Dendritic cell treated with granulocyte-macrophage colony-stimulating factor and Interleukin-4, amounts not matched to agents 40 ng/mL and 50 ng/mL, for 4 days (primary cell): ENCODE measurements at regions of chr1 and their contacts with region 1.

Region 1: DNA sequence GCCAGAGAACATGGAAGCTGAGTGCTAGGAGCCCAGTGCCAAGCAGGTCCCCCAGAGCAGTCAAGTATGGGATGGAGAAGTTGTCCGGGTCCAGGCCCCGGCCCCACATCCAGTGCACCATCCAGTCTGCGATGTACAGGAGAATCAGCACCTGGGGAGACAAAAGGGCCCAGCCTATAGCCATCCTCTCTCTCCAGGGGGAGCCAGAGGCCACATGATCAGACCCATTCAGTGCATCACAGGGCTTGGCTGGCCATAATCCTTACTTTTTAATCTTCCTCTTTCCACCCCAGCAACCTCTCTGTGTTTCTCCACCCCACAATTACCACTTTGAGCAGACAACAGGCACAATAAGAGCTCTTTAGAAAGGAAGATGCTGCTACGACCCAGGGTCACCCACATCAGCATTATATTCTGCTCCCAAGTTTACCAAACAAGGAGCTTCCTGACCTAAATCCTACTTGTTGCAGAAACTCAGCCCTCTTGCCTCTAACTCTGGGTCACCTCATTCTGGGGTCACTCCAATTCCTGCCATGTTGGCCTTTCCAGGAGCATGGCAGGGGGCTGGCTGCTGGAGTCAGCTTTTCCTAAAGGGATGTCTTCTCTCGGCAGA is 16.4 kb upstream of the RAB29 start:
- H3K4me3 Mint-ChIP-seq: no peak overlapping the region
- H3K27ac Mint-ChIP-seq: no peak overlapping the region
- H3K4me1 Mint-ChIP-seq: peaks cover 27% of the 10 kb centered on the region
- H3K27me3 Mint-ChIP-seq: no peaks in the 10 kb centered on the region

Region 2: GRCh38 chr1:205907794-205908193 is 116.1 kb after region 1 on chr1:
- intact Hi-C with region 1: loop called (anchors 2 kb)
- H3K4me3 Mint-ChIP-seq: no peak overlapping the region
- H3K27ac Mint-ChIP-seq: no peak overlapping the region
- H3K4me1 Mint-ChIP-seq: no peaks in the 10 kb centered on the region
- H3K27me3 Mint-ChIP-seq: peaks cover 7% of the 10 kb centered on the region

Region 3: GRCh38 chr1:205977402-205978014 is 185.8 kb after region 1 on chr1:
- intact Hi-C with region 1: loop called (anchors 1 kb)
- H3K4me3 Mint-ChIP-seq: no peak overlapping the region
- H3K27ac Mint-ChIP-seq: no peak overlapping the region
- H3K4me1 Mint-ChIP-seq: peaks cover 12% of the 10 kb centered on the region
- H3K27me3 Mint-ChIP-seq: peaks cover 3% of the 10 kb centered on the region

Region 4: DNA sequence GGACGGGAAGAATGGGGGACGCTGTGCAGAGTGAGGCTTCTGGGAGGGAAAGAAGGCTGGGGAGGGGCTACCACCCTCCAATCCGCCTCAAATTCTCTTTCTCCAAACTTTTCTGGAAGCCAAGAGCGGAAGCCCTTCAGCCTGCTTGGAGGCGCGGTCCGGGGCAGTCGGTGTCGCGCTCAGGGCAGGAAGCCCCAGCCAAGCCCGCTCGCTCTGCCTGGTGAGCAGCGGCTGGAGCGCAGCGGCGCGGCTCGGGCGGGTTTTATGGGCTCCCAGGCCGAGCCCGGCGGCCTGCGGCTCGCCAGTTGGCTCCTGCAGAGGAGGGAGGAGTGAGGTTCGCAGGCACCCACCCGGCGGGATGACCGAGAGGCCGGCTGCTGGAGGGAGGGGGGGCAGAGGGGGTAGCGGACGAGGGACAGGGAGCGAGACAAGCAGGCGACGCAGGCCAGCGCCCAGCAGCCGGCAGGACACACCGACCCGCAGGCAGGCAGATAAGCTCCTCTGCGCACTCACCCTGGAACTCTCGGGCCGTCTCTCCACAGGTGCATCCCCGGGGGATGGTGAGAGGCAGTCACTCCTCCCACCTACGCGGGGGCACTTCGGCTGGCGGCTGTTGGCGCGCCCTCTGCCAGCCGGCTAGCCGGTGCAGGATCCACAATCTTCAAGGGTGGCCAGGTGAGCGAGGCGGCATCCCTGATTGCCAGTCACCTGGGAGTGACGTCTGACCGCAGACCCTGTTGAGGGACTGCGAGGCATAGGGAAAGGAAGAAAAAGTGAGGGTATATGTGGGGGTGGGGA is 325.7 kb after region 1 on chr1 and contains the start of gene AVPR1B:
- intact Hi-C with region 1: loop called (anchors 5 kb)
- H3K4me3 Mint-ChIP-seq: peak within 1 kb of the TSS; percentile 41
- H3K27ac Mint-ChIP-seq: peak within 1 kb of the TSS; percentile 11
- H3K4me1 Mint-ChIP-seq: peaks cover 27% of the 10 kb centered on the region
- H3K27me3 Mint-ChIP-seq: peaks cover 57% of the 10 kb centered on the region